ENCODE measurements at regions of chr2 and their contacts with region 1.

Region 1: DNA sequence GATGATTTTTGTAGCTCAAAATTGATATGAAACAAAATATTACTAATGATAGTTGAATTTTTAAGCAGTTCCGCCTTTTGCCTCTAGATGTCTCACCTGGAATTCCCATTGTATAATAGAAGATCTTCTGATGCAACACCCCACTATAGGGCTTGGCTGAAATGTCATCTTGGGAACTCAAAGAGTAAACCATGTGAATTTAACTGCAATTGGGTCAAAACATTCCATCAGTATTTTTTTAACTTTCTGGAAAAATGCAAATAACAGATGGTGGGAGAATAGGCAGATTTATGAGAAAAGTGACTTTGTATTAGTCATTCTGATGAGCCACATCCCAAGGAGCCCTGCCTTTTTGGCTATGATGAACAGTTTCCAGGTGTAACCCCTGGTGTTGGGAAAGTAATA is 489.9 kb downstream of the NYAP2 start:
- DNase-seq: peak in 1 of 2 donors; percentile 5
- ATAC-seq: peak in 3 of 8 donors; percentile 47 to 65 (median 51)
- H3K4me3 ChIP-seq: no peak overlapping the region
- H3K27ac ChIP-seq: no peak overlapping the region
- H3K4me1 ChIP-seq: peaks cover 0 to 5% (median 0%) of the 10 kb centered on the region in 9 donors
- H3K27me3 ChIP-seq: no peaks in the 10 kb centered on the region
- CTCF ChIP-seq: peak; percentile 42 to 85 (median 77)

Region 2: GRCh38 chr2:226995625-226996041 is 1106.2 kb after region 1 on chr2:
- intact Hi-C with region 1: loop called in 1 of 10 experiments (anchors 10 kb)
- DNase-seq: peak; percentile 9 to 52
- ATAC-seq: peak in 4 of 8 donors; percentile 25 to 61 (median 43)
- H3K4me3 ChIP-seq: no peak overlapping the region
- H3K27ac ChIP-seq: no peak overlapping the region
- H3K4me1 ChIP-seq: peaks cover 0 to 6% (median 0%) of the 10 kb centered on the region in 9 donors
- H3K27me3 ChIP-seq: no peaks in the 10 kb centered on the region
- CTCF ChIP-seq: no peak